CD8-positive, alpha-beta T cell (primary cell): ENCODE measurements at regions of chr5 and their contacts with region 1.

Region 1: DNA sequence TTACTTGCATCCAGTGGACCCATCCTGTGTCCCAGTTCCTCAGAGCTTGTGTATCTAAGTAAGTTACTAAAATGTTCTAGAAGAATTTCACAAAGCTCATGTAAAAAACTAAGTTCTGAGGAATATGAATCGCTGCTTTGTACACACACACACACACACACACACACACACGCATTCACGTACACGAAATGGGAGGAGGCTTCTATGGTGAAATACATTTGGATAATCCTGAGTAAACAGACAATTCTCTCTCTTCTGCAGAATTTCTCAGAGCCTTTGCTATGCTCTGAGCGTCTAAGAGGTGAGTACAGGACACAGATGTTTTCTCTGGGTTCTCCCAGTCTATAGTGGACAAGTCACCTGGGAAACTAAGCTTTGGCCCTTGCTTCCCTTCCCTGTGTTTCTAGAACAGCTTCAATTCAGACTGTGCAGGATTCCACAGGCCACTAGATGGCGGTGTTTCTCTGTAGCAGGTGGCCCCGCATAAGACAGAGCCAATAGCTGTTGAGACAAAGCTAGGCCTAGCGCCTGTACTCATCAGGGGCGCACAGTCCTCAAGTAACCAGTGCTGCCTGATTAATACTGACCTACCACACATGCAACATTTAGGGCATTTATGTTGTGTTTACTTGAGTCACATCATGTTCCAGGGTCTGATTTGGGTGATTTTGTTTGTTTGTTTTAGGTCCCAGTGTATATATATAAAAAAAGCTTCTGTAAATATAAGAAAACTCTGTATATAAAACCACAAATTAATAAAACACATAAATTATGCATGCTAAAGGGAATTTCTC is 114.8 kb downstream of the LIFR start:
- DNase-seq: peak; percentile 64 to 87 (median 81)
- ATAC-seq: peak; percentile 96
- H3K4me3 ChIP-seq: no peak overlapping the region
- H3K4me3 Mint-ChIP-seq: no peak overlapping the region
- H3K27ac ChIP-seq: no peak overlapping the region
- H3K27ac Mint-ChIP-seq: no peak overlapping the region
- H3K4me1 ChIP-seq: no peaks in the 10 kb centered on the region
- H3K4me1 Mint-ChIP-seq: peaks cover 2% of the 10 kb centered on the region
- H3K27me3 ChIP-seq: no peaks in the 10 kb centered on the region
- H3K27me3 Mint-ChIP-seq: peaks cover 43% of the 10 kb centered on the region
- CTCF ChIP-seq: peak; percentile 94

Region 2: DNA sequence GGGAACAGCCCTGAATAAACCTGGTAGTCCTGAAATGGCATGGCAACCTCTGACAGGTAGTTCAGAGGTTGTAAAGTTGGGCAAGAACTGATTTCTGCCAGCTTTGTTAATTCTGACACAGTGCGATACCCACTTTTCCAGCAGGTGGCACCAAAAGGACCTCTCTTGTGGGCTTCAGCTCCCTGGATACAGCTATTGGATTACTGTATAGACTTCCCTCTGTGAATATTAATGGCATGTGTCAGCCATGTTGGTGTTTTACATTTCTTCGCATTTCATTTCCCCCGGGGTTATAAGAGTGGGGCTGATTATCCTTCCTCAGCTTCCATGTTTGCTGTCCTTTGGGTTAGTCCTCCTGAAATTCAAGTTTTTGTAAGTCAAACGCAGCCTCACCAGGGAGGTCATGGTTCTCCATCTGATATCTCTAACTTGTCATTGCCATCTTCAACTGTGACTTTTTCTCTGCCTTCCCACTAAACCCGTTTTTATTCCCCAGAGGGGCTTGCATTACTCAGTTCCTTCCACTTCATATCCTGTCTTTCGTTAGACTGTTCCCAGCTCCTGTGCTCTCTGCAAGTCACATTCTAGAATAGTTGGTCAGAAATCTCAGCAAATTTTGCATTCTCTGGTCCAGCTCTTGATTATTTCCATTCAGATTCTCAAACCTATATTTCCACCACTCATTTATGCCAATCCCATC is 20.8 kb before region 1 on chr5:
- CTCF ChIA-PET with region 1: interaction called, 12 read pairs
- POLR2A ChIA-PET with region 1: no interaction called
- intact Hi-C with region 1: no loop called
- DNase-seq: peak in 4 of 9 experiments; percentile 11 to 33 (median 21)
- ATAC-seq: no peak
- H3K4me3 ChIP-seq: no peak overlapping the region
- H3K4me3 Mint-ChIP-seq: no peak overlapping the region
- H3K27ac ChIP-seq: no peak overlapping the region
- H3K27ac Mint-ChIP-seq: no peak overlapping the region
- H3K4me1 ChIP-seq: no peaks in the 10 kb centered on the region
- H3K4me1 Mint-ChIP-seq: no peaks in the 10 kb centered on the region
- H3K27me3 ChIP-seq: peaks cover 0 to 5% of the 10 kb centered on the region in 2 experiments
- H3K27me3 Mint-ChIP-seq: peaks cover 33% of the 10 kb centered on the region
- CTCF ChIP-seq: peak; percentile 53

Region 3: GRCh38 chr5:38463634-38464521 is 22.2 kb after region 1 on chr5:
- CTCF ChIA-PET with region 1: interaction called, 12 read pairs
- POLR2A ChIA-PET with region 1: no interaction called
- intact Hi-C with region 1: no loop called
- DNase-seq: no peak
- ATAC-seq: no peak
- H3K4me3 ChIP-seq: no peak overlapping the region
- H3K4me3 Mint-ChIP-seq: no peak overlapping the region
- H3K27ac ChIP-seq: no peak overlapping the region
- H3K27ac Mint-ChIP-seq: no peak overlapping the region
- H3K4me1 ChIP-seq: no peaks in the 10 kb centered on the region
- H3K4me1 Mint-ChIP-seq: no peaks in the 10 kb centered on the region
- H3K27me3 ChIP-seq: peaks cover 11 to 13% of the 10 kb centered on the region in 2 experiments
- H3K27me3 Mint-ChIP-seq: peaks cover 42% of the 10 kb centered on the region
- CTCF ChIP-seq: no peak

Region 4: DNA sequence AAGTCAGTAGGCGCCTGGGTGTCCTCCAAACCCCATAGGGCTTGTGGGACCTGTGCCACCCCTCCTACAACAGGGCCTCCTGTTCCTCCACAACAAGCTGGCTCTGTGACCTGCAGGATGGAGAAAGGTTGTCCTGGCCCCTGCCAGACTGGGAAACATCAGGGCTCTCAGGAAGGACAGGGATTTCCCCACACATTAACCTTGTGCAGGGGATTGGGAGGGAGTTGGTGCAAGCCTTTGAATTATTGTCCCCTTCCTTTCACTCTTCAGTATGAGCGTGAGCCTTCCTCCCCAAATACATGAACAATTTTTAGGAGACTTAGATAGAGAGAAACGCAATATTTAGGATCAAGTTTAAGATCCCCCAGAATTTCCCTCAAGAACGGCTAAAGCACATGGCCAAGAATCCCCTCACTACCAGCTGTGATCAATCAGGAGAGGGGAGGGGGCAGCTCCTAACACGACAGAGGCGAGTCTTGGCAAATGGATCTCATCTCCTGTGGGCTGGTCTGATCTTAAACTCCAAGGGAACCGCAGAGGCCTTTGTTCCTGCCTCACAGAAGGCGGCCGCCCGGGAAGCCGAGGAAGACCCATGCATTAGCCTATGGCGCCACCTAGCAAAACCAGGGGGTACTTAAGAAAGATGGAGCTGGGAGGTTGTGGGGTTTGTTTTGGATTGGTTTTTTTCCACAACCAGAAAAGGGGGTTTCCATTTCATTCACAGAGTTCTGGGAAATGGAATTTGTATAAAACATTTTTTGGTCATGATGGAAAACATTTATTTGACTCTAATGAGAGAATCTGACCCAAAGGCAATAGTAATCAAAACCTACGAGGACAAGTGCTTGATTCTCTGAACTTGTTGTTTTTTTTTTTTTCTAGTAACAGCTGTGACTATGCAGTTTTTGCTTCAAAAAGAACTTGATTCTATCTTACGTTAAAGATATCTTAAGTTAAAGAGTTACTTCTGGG is 368.0 kb after region 1 on chr5:
- CTCF ChIA-PET with region 1: interaction called, 21 read pairs
- POLR2A ChIA-PET with region 1: no interaction called
- intact Hi-C with region 1: loop called (anchors 1 to 2 kb)
- DNase-seq: peak in 4 of 9 experiments; percentile 22 to 56 (median 38)
- ATAC-seq: no peak
- H3K4me3 ChIP-seq: no peak overlapping the region
- H3K4me3 Mint-ChIP-seq: no peak overlapping the region
- H3K27ac ChIP-seq: no peak overlapping the region
- H3K27ac Mint-ChIP-seq: no peak overlapping the region
- H3K4me1 ChIP-seq: no peaks in the 10 kb centered on the region
- H3K4me1 Mint-ChIP-seq: no peaks in the 10 kb centered on the region
- H3K27me3 ChIP-seq: peaks cover 0 to 8% of the 10 kb centered on the region in 2 experiments
- H3K27me3 Mint-ChIP-seq: peaks cover 41% of the 10 kb centered on the region
- CTCF ChIP-seq: peak; percentile 29

Region 5: GRCh38 chr5:39194466-39195136 is 753.0 kb after region 1 on chr5:
- CTCF ChIA-PET with region 1: no interaction called
- POLR2A ChIA-PET with region 1: no interaction called
- intact Hi-C with region 1: no loop called
- DNase-seq: peak in 1 of 9 experiments; percentile 41
- ATAC-seq: no peak
- H3K4me3 ChIP-seq: peak overlapping the region; percentile 12 to 28
- H3K4me3 Mint-ChIP-seq: peak overlapping the region; percentile 77
- H3K27ac ChIP-seq: peak overlapping the region; percentile 41 to 88
- H3K27ac Mint-ChIP-seq: peak overlapping the region; percentile 94
- H3K4me1 ChIP-seq: peaks cover 72% of the 10 kb centered on the region
- H3K4me1 Mint-ChIP-seq: peaks cover 76% of the 10 kb centered on the region
- H3K27me3 ChIP-seq: no peaks in the 10 kb centered on the region
- H3K27me3 Mint-ChIP-seq: no peaks in the 10 kb centered on the region
- CTCF ChIP-seq: no peak

Region 6: GRCh38 chr5:39547553-39548154 is 1106.0 kb after region 1 on chr5:
- CTCF ChIA-PET with region 1: interaction called, 15 read pairs
- POLR2A ChIA-PET with region 1: no interaction called
- intact Hi-C with region 1: loop called (anchors 1 to 10 kb)
- DNase-seq: peak in 3 of 9 experiments; percentile 11 to 64 (median 45)
- ATAC-seq: peak; percentile 46
- H3K4me3 ChIP-seq: no peak overlapping the region
- H3K4me3 Mint-ChIP-seq: peak overlapping the region; percentile 43
- H3K27ac ChIP-seq: no peak overlapping the region
- H3K27ac Mint-ChIP-seq: no peak overlapping the region
- H3K4me1 ChIP-seq: no peaks in the 10 kb centered on the region
- H3K4me1 Mint-ChIP-seq: peaks cover 6% of the 10 kb centered on the region
- H3K27me3 ChIP-seq: no peaks in the 10 kb centered on the region
- H3K27me3 Mint-ChIP-seq: no peaks in the 10 kb centered on the region
- CTCF ChIP-seq: peak; percentile 72